Endothelial cell of umbilical vein (primary cell): ENCODE measurements at regions of chr15 and their contacts with region 1.

Region 1: GRCh38 chr15:45587095-45587860 is at the start of gene BLOC1S6:
- DNase-seq: peak; percentile 92
- H3K4me3 ChIP-seq: peak within 1 kb of the TSS; percentile 89 to 98 (median 90)
- H3K27ac ChIP-seq: peak within 1 kb of the TSS; percentile 83
- H3K4me1 ChIP-seq: peaks cover 29% of the 10 kb centered on the region
- H3K27me3 ChIP-seq: peaks cover 0 to 2% of the 10 kb centered on the region in 2 experiments
- CTCF ChIP-seq: no peak
- POLR2A ChIP-seq: peak; percentile 89
- total RNA-seq, gene BLOC1S6: 39.2 and 43.4 TPM in 2 replicates

Region 2: DNA sequence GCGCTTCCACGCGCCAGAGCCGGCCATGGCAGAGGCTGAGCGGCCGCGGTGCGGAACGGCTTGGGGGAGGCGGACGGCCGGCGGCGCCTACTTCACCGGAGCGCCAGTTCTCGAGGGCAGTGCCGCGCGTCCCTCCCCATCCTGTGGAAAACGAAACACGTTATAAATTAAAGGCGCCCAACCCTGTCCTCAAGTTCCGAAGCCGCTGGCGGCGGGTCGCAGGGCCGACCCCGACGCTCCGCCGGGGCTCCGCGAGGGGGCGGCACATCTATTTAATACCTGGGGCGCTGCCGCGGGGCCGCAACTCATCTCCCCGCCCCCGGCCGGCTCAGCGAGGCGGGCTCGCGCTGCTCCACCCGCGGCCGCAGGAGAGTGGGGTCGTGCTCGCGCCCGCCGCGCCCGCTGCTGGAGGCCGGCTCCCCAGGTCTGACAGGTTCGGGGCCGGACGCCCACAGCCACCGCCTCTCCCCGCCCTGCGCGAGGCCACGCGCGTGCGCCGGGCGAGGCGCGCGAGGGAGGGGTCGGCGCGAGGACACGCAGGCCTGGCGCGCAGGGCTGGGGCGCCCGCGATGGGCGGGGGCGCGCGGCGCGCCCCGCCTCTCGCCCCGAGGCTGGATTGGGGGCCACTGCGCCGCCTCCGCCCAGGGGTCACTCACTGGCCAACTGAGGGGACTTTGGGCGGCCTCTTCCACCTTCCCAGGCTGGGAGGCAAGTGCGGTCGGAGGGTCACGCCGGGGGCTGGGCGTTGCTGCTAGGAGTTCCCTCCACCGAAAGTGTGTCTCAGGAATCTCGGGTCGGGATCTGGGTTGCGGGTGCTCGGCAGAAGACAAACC is 64.7 kb before region 1 on chr15 and contains the start of gene SLC30A4:
- CTCF ChIA-PET with region 1: interaction called, 4 read pairs
- POLR2A ChIA-PET with region 1: no interaction called
- dilution Hi-C with region 1: no loop called
- intact Hi-C with region 1: loop called (anchors 1 kb)
- DNase-seq: peak; percentile 68
- H3K4me3 ChIP-seq: peak within 1 kb of the TSS; percentile 53 to 90 (median 60)
- H3K27ac ChIP-seq: no peak within 1 kb of the TSS
- H3K4me1 ChIP-seq: peaks cover 9% of the 10 kb centered on the region
- H3K27me3 ChIP-seq: peaks cover 0 to 3% of the 10 kb centered on the region in 2 experiments
- CTCF ChIP-seq: peak; percentile 12 to 49
- POLR2A ChIP-seq: no peak
- total RNA-seq, gene SLC30A4: 3.8 and 3.9 TPM in 2 replicates

Region 3: DNA sequence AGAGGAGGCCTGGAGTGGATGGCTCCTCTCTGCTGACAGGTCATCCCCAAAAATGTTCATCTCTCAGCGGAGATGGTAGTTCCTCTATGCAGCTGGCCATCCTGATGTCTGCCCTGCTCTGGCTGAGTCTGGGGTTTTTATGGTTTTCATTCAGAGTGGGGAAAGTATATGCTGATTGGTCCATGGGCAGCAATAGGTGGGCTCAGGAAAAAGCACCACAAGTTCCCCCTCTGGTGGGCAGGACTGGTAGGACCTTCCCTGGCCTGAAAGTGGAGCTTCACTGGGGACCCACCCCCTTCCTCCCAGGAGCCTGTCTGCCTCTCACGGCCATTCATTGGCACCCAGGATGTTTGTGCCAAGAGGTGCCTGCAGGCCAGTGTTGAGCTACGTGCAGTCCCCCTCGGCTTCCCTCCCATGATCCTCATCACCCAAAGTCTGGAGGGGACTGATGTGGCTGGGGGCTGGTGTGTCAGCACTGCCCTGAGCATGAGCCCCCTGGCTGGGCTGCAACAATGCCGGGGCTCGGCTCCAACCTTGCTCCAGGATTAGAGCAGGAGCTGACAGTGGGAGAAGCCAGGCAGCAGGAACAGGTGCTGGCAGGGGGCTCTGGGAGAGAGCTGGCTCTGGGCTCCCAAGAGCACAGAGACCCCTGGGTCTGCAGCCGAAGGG is 13.2 kb before region 1 on chr15:
- CTCF ChIA-PET with region 1: interaction called, 10 read pairs
- POLR2A ChIA-PET with region 1: no interaction called
- dilution Hi-C with region 1: no loop called
- intact Hi-C with region 1: no loop called
- DNase-seq: no peak
- H3K4me3 ChIP-seq: no peak overlapping the region
- H3K27ac ChIP-seq: no peak overlapping the region
- H3K4me1 ChIP-seq: no peaks in the 10 kb centered on the region
- H3K27me3 ChIP-seq: peaks cover 2 to 10% of the 10 kb centered on the region in 2 experiments
- CTCF ChIP-seq: peak; percentile 21 to 35
- POLR2A ChIP-seq: no peak

Region 4: DNA sequence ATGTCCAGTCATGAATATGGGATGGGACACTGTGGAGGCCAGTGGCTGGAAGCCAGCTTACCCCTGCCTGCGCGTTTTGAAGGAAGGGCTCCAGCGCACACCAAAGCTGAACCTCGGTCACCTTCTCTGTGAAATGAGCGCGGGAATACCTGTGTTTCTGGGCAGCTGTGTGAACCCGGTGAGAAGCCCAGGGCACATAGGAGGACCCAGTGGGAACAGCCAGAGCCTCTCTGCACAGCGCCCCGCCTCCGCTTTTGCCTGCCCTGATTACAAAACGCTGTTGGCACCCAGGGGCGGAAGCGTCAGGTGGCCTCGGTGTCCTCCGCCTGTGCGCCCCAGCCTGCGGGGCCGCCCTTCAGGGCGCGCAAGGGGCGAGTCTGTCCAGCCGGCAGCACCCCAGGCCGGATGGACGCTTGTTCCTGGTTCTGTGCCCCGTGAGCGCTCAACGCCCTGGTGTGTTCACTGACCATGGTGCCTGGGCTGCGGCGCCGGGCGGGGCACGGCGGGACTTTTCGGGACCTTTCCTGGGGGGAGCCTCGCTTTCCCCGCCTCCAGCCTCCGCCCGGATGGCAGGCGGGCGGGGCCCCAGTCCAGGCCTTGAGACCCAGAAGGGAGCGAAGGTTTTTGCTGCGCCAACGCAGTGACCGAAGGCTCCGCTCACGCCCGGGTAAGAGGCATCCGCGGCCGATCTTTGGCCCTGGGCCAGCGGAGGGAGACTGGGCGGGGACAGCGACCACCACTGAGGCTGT is 47.3 kb after region 1 on chr15 and contains the start of gene SQOR:
- CTCF ChIA-PET with region 1: no interaction called
- POLR2A ChIA-PET with region 1: no interaction called
- dilution Hi-C with region 1: no loop called
- intact Hi-C with region 1: loop called (anchors 2 kb)
- DNase-seq: peak; percentile 77
- H3K4me3 ChIP-seq: peak within 1 kb of the TSS; percentile 52 to 88 (median 82)
- H3K27ac ChIP-seq: no peak within 1 kb of the TSS
- H3K4me1 ChIP-seq: peaks cover 20% of the 10 kb centered on the region
- H3K27me3 ChIP-seq: no peaks in the 10 kb centered on the region
- CTCF ChIP-seq: no peak
- POLR2A ChIP-seq: peak; percentile 68
- total RNA-seq, gene SQOR: 6.6 and 17.9 TPM in 2 replicates

Region 5: GRCh38 chr15:46091860-46092450 is 504.7 kb after region 1 on chr15:
- CTCF ChIA-PET with region 1: no interaction called
- POLR2A ChIA-PET with region 1: no interaction called
- dilution Hi-C with region 1: no loop called
- intact Hi-C with region 1: no loop called
- DNase-seq: peak; percentile 30
- H3K4me3 ChIP-seq: no peak overlapping the region
- H3K27ac ChIP-seq: no peak overlapping the region
- H3K4me1 ChIP-seq: peaks cover 38% of the 10 kb centered on the region
- H3K27me3 ChIP-seq: no peaks in the 10 kb centered on the region
- CTCF ChIP-seq: peak; percentile 38 to 60
- POLR2A ChIP-seq: no peak